ENCODE measurements at regions of chr5 and their contacts with region 1.

Region 1: GRCh38 chr5:79514391-79515105 is 614 bp upstream of the HOMER1 start:
- DNase-seq: peak; percentile 90 to 94 (median 93)
- ATAC-seq: peak; percentile 82 to 93 (median 89)
- H3K4me3 ChIP-seq: peak overlapping the region; percentile 71 to 95 (median 88)
- H3K27ac ChIP-seq: peak overlapping the region; percentile 81 to 99 (median 96)
- H3K4me1 ChIP-seq: peaks cover 0 to 26% (median 2%) of the 10 kb centered on the region in 12 donors
- H3K27me3 ChIP-seq: peaks cover 0 to 34% (median 0%) of the 10 kb centered on the region in 9 donors
- CTCF ChIP-seq: no peak
- POLR2A ChIP-seq: peak in 1 of 2 donors; percentile 93

Region 2: GRCh38 chr5:79235634-79236363 is 278.7 kb before region 1 on chr5 and contains the start of gene JMY:
- intact Hi-C with region 1: loop called in 2 of 10 experiments (anchors 5 kb)
- DNase-seq: peak; percentile 87 to 92 (median 90)
- ATAC-seq: peak; percentile 77 to 96 (median 94)
- H3K4me3 ChIP-seq: peak within 1 kb of the TSS; percentile 73 to 96 (median 92)
- H3K27ac ChIP-seq: peak within 1 kb of the TSS; percentile 79 to 98 (median 88)
- H3K4me1 ChIP-seq: peaks cover 0 to 40% (median 22%) of the 10 kb centered on the region in 12 donors
- H3K27me3 ChIP-seq: no peaks in the 10 kb centered on the region
- CTCF ChIP-seq: peak in 6 of 12 donors; percentile 14 to 34 (median 25)
- POLR2A ChIP-seq: peak in 1 of 2 donors; percentile 76
- total RNA-seq, gene JMY: 10.0 to 16.9 (median 11.5) TPM

Region 3: DNA sequence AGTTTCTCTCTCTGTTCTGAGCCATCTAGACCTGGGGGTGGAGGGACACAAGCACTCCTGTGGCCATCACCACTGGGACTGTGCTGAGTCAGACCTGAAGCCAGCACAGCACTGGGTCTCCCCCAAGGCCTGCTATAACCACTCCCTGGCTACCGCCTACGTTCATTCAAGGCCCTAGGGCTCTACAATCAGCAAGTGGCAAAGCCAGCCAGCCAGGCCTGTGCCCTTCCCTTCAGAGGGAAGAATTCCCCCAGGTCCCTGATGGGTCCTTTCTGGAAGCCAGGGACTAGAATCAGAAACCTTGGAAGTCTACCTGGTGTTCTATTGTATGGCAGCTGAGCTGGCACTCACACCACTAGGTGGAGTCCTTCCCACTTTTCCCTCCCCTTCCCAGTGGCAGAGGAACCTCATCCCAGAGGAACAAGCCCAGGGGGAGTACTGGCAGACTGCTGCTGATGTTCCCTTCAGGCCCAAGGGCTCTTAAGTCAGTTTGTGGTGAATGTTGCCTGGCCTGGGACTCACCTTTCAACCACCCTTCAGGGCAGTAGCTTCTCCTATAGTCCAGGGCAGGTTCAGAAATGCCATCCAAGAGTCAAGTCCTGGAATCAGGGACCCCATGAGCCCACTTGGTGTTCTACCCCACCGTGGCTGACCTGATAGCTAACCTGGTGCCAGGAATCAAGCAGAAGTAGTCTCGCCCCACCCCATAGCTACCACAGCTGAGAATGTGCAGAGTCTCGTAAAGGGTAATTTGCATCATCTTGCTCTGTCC is 258.6 kb before region 1 on chr5:
- intact Hi-C with region 1: loop called in 1 of 10 experiments (anchors 10 kb)
- DNase-seq: no peak
- ATAC-seq: peak; percentile 43 to 68 (median 61)
- H3K4me3 ChIP-seq: no peak overlapping the region
- H3K27ac ChIP-seq: no peak overlapping the region
- H3K4me1 ChIP-seq: peaks cover 0 to 28% (median 7%) of the 10 kb centered on the region in 12 donors
- H3K27me3 ChIP-seq: no peaks in the 10 kb centered on the region
- CTCF ChIP-seq: peak in 11 of 12 donors; percentile 25 to 58 (median 38)
- POLR2A ChIP-seq: no peak

Region 4: DNA sequence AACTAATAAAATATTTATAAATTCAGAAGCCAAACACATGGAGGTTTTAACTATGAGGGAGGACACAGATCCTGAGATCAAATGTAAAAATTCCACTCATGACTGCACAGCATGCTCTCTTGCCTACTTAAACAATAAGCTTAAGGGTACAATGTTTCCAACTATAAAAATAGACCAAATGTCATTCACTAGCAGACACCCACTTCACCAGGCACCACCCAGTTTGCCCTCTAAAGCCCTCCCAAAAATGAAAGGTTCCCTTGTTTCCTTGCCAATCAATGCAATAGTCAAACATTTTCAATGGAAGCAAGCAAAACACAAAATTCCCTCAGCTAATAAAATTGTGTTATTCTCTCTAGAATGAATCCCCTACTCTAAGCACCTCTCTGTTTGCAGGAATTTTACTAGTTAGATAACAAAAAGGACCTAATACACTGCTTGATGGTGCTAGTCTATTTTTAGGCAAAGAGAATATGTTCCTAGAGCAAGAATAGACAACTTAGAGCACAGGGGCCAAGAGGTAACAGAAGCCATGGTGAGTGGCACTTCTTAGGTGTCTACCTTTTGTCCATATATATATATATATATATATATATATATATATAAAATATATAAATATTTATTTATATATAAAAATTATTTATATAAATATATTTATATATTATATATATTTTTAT is 135.9 kb before region 1 on chr5:
- intact Hi-C with region 1: loop called in 2 of 10 experiments (anchors 5 to 10 kb)
- DNase-seq: peak in 1 of 5 donors; percentile 38
- ATAC-seq: peak; percentile 93 to 97 (median 95)
- H3K4me3 ChIP-seq: no peak overlapping the region
- H3K27ac ChIP-seq: peak overlapping the region; percentile 32 to 85 (median 76)
- H3K4me1 ChIP-seq: peaks cover 0 to 8% (median 0%) of the 10 kb centered on the region in 12 donors
- H3K27me3 ChIP-seq: no peaks in the 10 kb centered on the region
- CTCF ChIP-seq: no peak
- POLR2A ChIP-seq: peak in 1 of 2 donors; percentile 16

Region 5: DNA sequence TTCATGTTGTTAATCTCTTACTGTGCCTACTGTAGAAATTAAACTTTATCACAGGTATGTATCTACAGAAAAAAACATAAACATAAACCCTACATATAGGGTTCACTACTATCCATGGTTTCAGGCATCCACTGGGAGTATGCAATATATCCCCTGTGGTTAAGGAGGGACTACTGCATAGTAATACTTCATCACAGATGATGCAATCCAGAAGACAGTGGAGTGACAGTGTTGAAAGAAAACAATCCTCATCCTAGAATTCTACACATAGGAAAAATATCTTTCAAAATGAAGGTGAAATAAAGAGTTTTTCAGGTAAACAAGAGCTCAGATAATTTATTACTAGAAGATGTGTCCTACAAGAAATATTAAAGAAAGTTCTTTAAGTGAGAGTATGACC is 106.5 kb before region 1 on chr5:
- intact Hi-C with region 1: no loop called
- DNase-seq: no peak
- ATAC-seq: no peak
- H3K4me3 ChIP-seq: no peak overlapping the region
- H3K27ac ChIP-seq: no peak overlapping the region
- H3K4me1 ChIP-seq: no peaks in the 10 kb centered on the region
- H3K27me3 ChIP-seq: no peaks in the 10 kb centered on the region
- CTCF ChIP-seq: no peak
- POLR2A ChIP-seq: no peak

Region 6: GRCh38 chr5:79464695-79465332 is 49.7 kb before region 1 on chr5:
- intact Hi-C with region 1: loop called in 3 of 10 experiments (anchors 5 to 10 kb)
- DNase-seq: no peak
- ATAC-seq: peak in 2 of 4 donors; percentile 36 to 56
- H3K4me3 ChIP-seq: no peak overlapping the region
- H3K27ac ChIP-seq: no peak overlapping the region
- H3K4me1 ChIP-seq: peaks cover 0 to 22% (median 2%) of the 10 kb centered on the region in 12 donors
- H3K27me3 ChIP-seq: no peaks in the 10 kb centered on the region
- CTCF ChIP-seq: peak; percentile 26 to 69 (median 55)
- POLR2A ChIP-seq: no peak

Region 7: GRCh38 chr5:79474367-79475151 is 40.0 kb before region 1 on chr5:
- intact Hi-C with region 1: loop called in 3 of 10 experiments (anchors 5 to 10 kb)
- DNase-seq: no peak
- ATAC-seq: peak in 1 of 4 donors; percentile 6
- H3K4me3 ChIP-seq: no peak overlapping the region
- H3K27ac ChIP-seq: peak overlapping the region in 1 of 12 donors; percentile 2
- H3K4me1 ChIP-seq: peaks cover 0 to 33% (median 3%) of the 10 kb centered on the region in 12 donors
- H3K27me3 ChIP-seq: no peaks in the 10 kb centered on the region
- CTCF ChIP-seq: no peak
- POLR2A ChIP-seq: no peak

Region 8: DNA sequence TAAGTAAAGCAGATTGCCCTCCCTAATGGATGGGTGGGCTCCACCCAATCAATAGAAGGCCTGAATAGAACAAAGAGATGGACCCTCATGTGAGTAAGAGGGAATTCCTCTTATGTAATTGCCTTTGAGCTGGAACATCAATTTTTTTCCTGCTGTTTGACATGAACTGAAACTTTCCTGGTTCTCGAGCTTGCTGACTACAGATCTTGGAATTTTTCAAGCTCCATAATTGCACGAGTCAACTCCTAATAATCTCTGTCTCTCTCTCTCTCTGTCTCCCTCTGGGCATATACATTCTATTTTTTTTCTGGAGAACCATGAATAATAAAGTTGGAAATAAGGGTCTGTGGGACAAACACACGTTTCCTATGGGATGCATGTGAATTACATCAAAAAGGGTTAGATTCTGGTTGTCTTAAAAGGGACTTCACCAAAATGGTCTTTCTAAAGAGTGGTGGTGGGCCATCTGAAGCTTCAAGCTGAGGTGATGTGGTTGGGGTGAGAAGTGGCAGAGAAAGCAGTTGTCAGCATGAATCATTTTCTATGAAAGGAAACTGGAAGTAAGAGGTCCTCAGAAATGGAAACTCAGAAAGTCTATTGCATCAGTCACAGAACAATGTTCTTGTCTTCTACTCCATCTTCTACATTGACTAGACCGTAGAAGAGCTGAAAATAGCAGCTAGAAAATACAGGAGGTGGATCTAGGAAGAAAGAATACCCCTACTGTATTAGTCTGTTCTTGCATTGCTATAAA is 46.4 kb after region 1 on chr5:
- intact Hi-C with region 1: no loop called
- DNase-seq: no peak
- ATAC-seq: no peak
- H3K4me3 ChIP-seq: no peak overlapping the region
- H3K27ac ChIP-seq: peak overlapping the region in 1 of 12 donors; percentile 54
- H3K4me1 ChIP-seq: peaks cover 0 to 30% (median 0%) of the 10 kb centered on the region in 12 donors
- H3K27me3 ChIP-seq: no peaks in the 10 kb centered on the region
- CTCF ChIP-seq: no peak
- POLR2A ChIP-seq: no peak

Measured in heart left ventricle (tissue), 16 donors.